ENCODE measurements at regions of chr19 and their contacts with region 1.

Region 1: DNA sequence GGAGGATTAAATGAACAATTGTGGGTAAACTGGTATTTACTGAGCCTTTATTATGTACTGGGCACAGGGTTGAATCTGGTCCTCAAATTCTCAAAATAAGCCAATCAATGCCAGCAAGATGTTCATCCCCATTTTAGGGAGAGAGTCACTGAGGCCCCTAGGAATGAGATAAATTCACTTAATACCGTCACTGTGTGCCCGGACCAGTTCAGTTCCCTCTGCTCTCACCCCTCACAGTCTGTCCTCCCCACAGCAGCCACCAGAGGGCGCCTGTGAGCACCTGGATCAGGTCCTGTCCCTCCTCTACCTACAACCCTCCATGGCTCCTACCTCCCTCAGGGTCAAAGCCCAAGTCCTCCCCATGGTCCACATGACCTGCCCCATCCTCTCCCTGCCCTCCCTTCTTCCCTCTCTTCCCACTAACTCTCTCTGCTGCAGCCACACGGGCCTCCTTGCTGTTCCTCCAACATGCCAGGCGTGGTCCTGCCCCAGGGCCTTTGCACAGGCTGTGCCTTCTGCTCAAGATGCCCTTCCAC is 42.0 kb upstream of the NFIC start:
- DNase-seq: peak; percentile 76

Region 2: GRCh38 chr19:3253270-3253669 is 71.1 kb before region 1 on chr19:
- CTCF ChIA-PET with region 1: no interaction called
- POLR2A ChIA-PET with region 1: no interaction called
- DNase-seq: no peak

Region 3: GRCh38 chr19:3429581-3430080 is 105.2 kb after region 1 on chr19:
- CTCF ChIA-PET with region 1: interaction called, 13 read pairs
- POLR2A ChIA-PET with region 1: interaction called, 4 read pairs
- DNase-seq: peak; percentile 85

Measured in HEK293T (cell line).